CD14-positive monocyte (primary cell): ENCODE measurements at regions of chr15 and their contacts with region 1.

Region 1: DNA sequence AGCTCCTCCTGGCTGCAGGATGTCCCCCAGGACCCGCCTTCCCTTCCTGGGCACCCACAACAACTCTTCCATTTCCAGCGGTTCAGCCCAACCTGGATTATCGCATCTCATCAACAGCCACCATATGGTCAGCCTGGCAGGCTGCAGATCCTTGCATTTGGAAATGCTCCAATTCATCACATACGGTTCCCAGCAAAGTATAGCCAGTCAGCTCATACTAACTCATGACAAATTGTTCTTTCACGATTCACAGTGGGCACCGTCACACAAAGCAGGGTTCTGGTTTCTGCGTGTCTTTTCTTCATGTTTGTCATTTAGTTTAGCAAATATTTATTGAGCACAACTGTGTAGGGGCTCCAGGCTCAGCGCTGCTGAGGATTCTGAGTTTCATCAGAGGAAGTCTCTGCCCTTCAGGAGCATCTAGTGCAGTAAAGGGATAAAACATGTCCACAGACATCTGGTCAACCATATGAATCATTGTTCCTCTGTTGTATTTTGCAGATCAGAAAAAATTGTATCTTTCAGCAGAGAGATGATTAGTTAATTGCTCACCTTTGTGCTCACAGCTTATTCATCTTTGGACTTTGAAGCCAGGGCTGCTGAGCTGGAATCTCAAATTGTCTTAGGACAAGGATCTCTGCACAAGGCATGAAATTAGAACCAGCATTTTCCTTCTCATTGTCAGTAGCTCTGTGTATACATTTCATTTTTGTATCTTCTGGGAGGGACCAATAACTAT is 125.1 kb downstream of the GABRG3 start:
- DNase-seq: no peak
- H3K4me3 ChIP-seq: no peak overlapping the region
- H3K4me3 Mint-ChIP-seq: no peak overlapping the region
- H3K27ac ChIP-seq: no peak overlapping the region
- H3K27ac Mint-ChIP-seq: no peak overlapping the region
- H3K4me1 ChIP-seq: no peaks in the 10 kb centered on the region
- H3K4me1 Mint-ChIP-seq: no peaks in the 10 kb centered on the region
- H3K27me3 ChIP-seq: no peaks in the 10 kb centered on the region
- H3K27me3 Mint-ChIP-seq: peaks cover 0 to 2% (median 0%) of the 10 kb centered on the region in 3 donors
- CTCF ChIP-seq: no peak

Region 2: DNA sequence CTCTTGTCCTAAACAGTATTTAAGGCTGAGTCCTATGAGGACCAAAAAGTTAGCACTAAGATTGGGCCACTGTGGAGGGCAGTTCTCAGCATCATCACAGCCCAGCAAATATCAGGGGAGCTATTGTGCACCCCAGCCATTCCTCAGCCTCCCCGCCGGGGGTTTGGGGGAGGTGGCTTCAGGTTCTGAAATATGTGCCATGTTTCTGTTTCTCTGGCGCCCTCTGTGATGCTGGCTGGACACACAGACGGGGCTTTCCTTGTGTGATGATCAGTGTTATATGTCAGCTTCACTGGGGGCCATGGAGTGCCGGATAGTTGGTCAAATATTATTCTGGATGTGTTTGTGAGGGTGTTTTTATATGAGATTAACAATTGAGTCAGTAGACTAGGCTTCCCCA is 18.3 kb before region 1 on chr15:
- intact Hi-C with region 1: loop called in 1 of 2 experiments (anchors 2 kb)
- DNase-seq: no peak
- H3K4me3 ChIP-seq: no peak overlapping the region
- H3K4me3 Mint-ChIP-seq: no peak overlapping the region
- H3K27ac ChIP-seq: no peak overlapping the region
- H3K27ac Mint-ChIP-seq: no peak overlapping the region
- H3K4me1 ChIP-seq: no peaks in the 10 kb centered on the region
- H3K4me1 Mint-ChIP-seq: no peaks in the 10 kb centered on the region
- H3K27me3 ChIP-seq: no peaks in the 10 kb centered on the region
- H3K27me3 Mint-ChIP-seq: no peaks in the 10 kb centered on the region
- CTCF ChIP-seq: no peak